ENCODE measurements at regions of chr22 and their contacts with region 1.

Region 1: DNA sequence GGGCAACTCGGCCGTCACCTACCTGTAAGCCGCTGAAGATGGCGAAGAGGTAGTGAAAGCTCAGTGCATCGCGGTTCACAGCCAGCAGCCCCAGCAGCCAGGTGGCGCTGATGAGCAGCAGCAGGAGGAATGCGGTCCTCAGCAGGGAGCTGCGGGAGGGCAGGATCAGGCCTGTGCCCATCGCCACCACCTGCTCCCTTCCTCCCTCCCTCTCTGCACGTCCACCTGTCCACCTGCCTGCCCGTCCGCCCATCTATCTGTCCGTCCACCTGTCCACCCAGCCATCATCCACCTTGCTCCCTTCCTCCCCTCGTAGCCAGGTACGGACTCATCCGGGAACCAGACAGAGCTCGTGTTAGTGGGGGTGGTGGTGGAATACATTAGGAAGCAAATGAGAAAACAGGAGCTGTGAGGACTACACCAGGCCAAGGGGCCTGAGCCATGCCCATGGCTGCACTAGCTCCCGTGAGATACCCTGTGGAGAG is 32.2 kb downstream of the TRMU start:
- DNase-seq: peak; percentile 82
- ATAC-seq: peak; percentile 77 to 86
- H3K4me3 ChIP-seq: no peak overlapping the region
- H3K27ac ChIP-seq: no peak overlapping the region
- H3K4me1 ChIP-seq: no peaks in the 10 kb centered on the region
- H3K27me3 ChIP-seq: peaks cover 16% of the 10 kb centered on the region
- CTCF ChIP-seq: peak; percentile 87

Region 2: DNA sequence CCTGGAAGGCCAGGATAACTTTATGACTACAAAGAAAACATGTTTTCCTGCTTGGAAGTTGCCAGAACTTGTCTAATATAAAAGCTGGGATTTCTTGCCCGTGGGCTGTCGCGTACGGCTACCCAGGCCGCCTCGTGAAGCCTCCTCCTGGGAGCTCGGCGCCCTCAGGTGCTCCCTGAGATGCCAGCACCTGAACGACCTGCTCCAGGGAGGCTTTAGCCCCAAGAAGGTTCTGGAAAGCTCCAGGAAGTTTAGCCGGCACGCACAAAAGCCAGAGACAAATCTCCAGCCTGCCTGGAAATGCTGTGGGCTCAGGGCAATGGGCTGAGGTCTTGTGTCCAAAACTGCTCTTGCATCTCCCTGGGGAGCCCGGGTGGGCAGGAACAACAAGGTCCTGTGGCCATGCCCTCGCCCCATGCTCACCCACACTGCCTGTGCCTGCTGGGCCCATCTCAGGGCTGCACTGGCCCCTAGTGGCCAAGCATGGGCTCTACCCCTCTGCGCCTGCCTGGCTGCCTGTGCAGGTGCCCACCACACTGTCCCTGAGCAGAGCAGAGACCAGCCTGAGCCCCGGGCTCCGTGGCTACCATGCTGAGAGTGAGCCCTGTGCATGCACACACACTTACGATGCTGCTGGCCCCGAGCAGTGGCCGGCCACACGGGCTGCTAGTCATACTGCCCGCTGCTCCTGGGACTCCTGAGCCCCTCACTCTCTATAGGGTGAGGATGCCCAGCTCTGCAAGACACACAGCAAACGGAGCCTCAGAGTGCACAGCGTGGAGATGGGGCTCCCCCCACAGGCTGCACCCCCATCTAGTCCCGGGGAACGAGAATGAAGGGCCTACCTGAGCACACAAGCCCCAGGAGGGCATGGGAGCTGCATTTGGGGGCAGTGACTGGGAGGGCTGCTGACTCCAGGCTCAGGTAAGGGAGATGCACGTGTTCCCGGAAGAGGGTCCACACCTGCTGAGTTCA is 174.5 kb after region 1 on chr22:
- intact Hi-C with region 1: loop called (anchors 10 kb)
- DNase-seq: peak; percentile 84
- ATAC-seq: peak; percentile 81 to 85
- H3K4me3 ChIP-seq: no peak overlapping the region
- H3K27ac ChIP-seq: peak overlapping the region; percentile 14
- H3K4me1 ChIP-seq: peaks cover 55% of the 10 kb centered on the region
- H3K27me3 ChIP-seq: peaks cover 23% of the 10 kb centered on the region
- CTCF ChIP-seq: peak; percentile 94